ENCODE measurements at regions of chr14 and their contacts with region 1.

Region 1: GRCh38 chr14:69398053-69398817 is at the starts of genes ERH and SLC39A9:
- DNase-seq: peak; percentile 94
- H3K4me3 ChIP-seq: peak within 1 kb of the TSS; percentile 78
- CTCF ChIP-seq: no peak

Region 2: DNA sequence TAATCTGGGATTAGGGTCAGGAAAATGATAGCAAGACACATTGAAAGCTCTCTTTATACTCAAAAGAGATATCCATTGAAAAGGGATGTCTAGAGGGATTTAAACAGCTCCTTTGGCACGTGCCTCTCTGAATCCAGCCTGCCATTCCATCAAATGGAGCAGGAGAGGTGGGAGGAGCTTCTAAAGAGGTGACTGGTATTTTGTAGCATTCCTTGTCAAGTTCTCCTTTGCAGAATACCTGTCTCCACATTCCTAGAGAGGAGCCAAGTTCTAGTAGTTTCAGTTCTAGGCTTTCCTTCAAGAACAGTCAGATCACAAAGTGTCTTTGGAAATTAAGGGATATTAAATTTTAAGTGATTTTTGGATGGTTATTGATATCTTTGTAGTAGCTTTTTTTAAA is 60.9 kb after region 1 on chr14:
- in situ Hi-C with region 1: loop called (anchors 5 kb)
- DNase-seq: no peak
- H3K4me3 ChIP-seq: no peak overlapping the region
- CTCF ChIP-seq: no peak